A549 (cell line): ENCODE measurements at regions of chr1 and their contacts with region 1.

Region 1: DNA sequence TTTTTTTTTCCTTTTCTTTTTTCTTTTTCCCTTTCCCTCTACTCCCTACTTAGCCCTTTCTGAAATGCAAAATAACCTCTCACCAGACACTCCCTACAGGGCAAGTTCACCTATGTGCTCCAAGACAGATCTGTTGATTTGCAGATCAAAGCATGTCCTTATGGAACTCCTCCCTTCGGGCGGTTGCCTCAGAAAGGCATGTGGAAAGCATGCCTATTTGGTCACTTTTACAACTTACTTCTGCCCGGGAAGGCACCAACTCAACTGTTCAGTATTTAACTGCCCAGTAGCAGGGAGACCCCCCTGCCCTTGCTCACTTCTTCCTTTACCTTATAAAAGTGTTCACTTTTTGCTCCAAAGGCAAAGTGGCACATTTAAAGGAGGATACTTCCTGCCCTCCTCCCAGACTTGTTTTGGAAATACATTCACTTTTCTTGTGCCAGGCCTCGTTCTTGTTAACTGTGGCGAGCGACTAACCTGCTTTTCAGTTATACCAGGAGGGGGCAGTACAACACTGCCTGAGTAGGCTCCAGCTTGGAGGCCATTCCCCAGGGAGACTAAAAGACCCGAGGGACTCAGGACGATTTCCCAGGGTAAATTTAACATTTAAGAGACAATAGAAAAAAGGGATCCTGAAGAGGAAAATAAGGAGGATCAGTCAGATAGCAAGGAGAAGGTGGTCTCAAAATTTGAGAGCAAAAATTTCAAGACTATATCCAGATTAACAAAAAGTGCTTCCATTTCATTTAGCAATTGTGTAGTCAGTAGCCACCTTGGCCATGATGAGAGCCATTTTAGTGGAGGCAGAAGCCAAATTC is 12.3 kb upstream of the SLAMF7 start:
- DNase-seq: peak; percentile 81 to 86
- ATAC-seq: peak; percentile 89 to 94
- H3K4me3 ChIP-seq: no peak overlapping the region
- H3K27ac ChIP-seq: peak overlapping the region; percentile 26 to 68; a peak in 5 of 6 replicates
- H3K4me1 ChIP-seq: peaks cover 14% of the 10 kb centered on the region
- CTCF ChIP-seq: peak; percentile 91
- EP300 ChIP-seq: no peak
- POLR2A ChIP-seq: no peak
- RAD21 ChIP-seq: peak; percentile 92 to 94

Region 2: DNA sequence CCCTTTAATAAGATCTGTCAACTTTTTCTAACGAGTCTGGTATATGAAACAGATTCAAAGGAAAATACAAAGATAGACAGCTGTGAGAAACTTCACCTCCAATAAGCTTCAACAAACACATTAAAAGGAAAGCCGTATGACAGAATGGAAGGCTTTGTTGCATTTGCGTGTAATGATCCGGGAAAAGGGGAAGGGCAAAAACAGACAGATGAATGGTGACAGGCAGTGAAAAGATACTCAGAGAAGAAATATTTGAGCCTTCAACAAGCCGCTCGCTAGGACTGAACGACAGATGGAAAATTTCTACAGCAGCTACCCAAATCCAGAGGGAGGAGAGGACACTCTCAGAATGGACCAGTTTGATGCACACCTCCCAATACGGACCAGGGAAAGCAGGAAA is 398.5 kb before region 1 on chr1:
- CTCF ChIA-PET with region 1: no interaction called
- POLR2A ChIA-PET with region 1: no interaction called
- DNase-seq: no peak
- ATAC-seq: no peak
- H3K4me3 ChIP-seq: no peak overlapping the region
- H3K27ac ChIP-seq: no peak overlapping the region
- H3K4me1 ChIP-seq: no peaks in the 10 kb centered on the region
- CTCF ChIP-seq: no peak
- EP300 ChIP-seq: no peak
- POLR2A ChIP-seq: no peak
- RAD21 ChIP-seq: no peak

Region 3: GRCh38 chr1:160739098-160739511 is 12.4 kb after region 1 on chr1 and contains the start of gene SLAMF7:
- CTCF ChIA-PET with region 1: interaction called, 14 read pairs
- POLR2A ChIA-PET with region 1: no interaction called
- DNase-seq: peak in 1 of 2 experiments; percentile 10
- ATAC-seq: peak; percentile 56 to 64; a peak in 2 of 6 replicates
- H3K4me3 ChIP-seq: no peak within 1 kb of the TSS
- H3K27ac ChIP-seq: 0 out of 6 replicates have a peak within 1 kb of the TSS, but pooled peaks of 1 of the 2 experiments have one; percentile 13
- H3K4me1 ChIP-seq: 0 out of 3 replicates have a peak, but pooled peaks cover 4% of the 10 kb centered on the region
- CTCF ChIP-seq: no peak
- EP300 ChIP-seq: no peak
- POLR2A ChIP-seq: no peak
- RAD21 ChIP-seq: no peak
- polyA plus RNA-seq, gene SLAMF7: 0.57 and 0.73 TPM in 2 replicates